B cell (primary cell): ENCODE measurements at regions of chr16 and their contacts with region 1.

Region 1: GRCh38 chr16:4550591-4550990 is 5.5 kb upstream of the C16orf96 start:
- DNase-seq: no peak
- ATAC-seq: no peak
- H3K4me3 ChIP-seq: no peak overlapping the region
- H3K4me3 Mint-ChIP-seq: no peak overlapping the region
- H3K27ac ChIP-seq: no peak overlapping the region
- H3K27ac Mint-ChIP-seq: peak overlapping the region; percentile 53
- H3K4me1 ChIP-seq: peaks cover 0 to 9% of the 10 kb centered on the region in 2 donors
- H3K4me1 Mint-ChIP-seq: peaks cover 3% of the 10 kb centered on the region
- H3K27me3 ChIP-seq: no peaks in the 10 kb centered on the region
- H3K27me3 Mint-ChIP-seq: peaks cover 6% of the 10 kb centered on the region
- CTCF ChIP-seq: no peak

Region 2: GRCh38 chr16:4358831-4359561 is 191.6 kb before region 1 on chr16:
- CTCF ChIA-PET with region 1: interaction called, 6 read pairs
- POLR2A ChIA-PET with region 1: no interaction called
- intact Hi-C with region 1: loop called (anchors 1 kb)
- DNase-seq: peak; percentile 73
- ATAC-seq: peak; percentile 77
- H3K4me3 ChIP-seq: no peak overlapping the region
- H3K4me3 Mint-ChIP-seq: no peak overlapping the region
- H3K27ac ChIP-seq: no peak overlapping the region
- H3K27ac Mint-ChIP-seq: no peak overlapping the region
- H3K4me1 ChIP-seq: peaks cover 0 to 18% of the 10 kb centered on the region in 2 donors
- H3K4me1 Mint-ChIP-seq: peaks cover 6% of the 10 kb centered on the region
- H3K27me3 ChIP-seq: no peaks in the 10 kb centered on the region
- H3K27me3 Mint-ChIP-seq: no peaks in the 10 kb centered on the region
- CTCF ChIP-seq: peak; percentile 95

Region 3: GRCh38 chr16:4500272-4500671 is 50.3 kb before region 1 on chr16:
- CTCF ChIA-PET with region 1: interaction called, 178 read pairs
- POLR2A ChIA-PET with region 1: interaction called, 6 read pairs
- intact Hi-C with region 1: no loop called
- DNase-seq: no peak
- ATAC-seq: no peak
- H3K4me3 ChIP-seq: no peak overlapping the region
- H3K4me3 Mint-ChIP-seq: no peak overlapping the region
- H3K27ac ChIP-seq: no peak overlapping the region
- H3K27ac Mint-ChIP-seq: no peak overlapping the region
- H3K4me1 ChIP-seq: peaks cover 22 to 29% of the 10 kb centered on the region in 2 donors
- H3K4me1 Mint-ChIP-seq: peaks cover 34% of the 10 kb centered on the region
- H3K27me3 ChIP-seq: no peaks in the 10 kb centered on the region
- H3K27me3 Mint-ChIP-seq: no peaks in the 10 kb centered on the region
- CTCF ChIP-seq: no peak